ENCODE measurements at regions of chr18 and their contacts with region 1.

Region 1: GRCh38 chr18:8654503-8655451 is 45.5 kb downstream of the RAB12 start:
- DNase-seq: no peak
- H3K4me3 Mint-ChIP-seq: no peak overlapping the region
- H3K27ac Mint-ChIP-seq: no peak overlapping the region
- H3K4me1 Mint-ChIP-seq: no peaks in the 10 kb centered on the region
- H3K27me3 Mint-ChIP-seq: peaks cover 28% of the 10 kb centered on the region

Region 2: DNA sequence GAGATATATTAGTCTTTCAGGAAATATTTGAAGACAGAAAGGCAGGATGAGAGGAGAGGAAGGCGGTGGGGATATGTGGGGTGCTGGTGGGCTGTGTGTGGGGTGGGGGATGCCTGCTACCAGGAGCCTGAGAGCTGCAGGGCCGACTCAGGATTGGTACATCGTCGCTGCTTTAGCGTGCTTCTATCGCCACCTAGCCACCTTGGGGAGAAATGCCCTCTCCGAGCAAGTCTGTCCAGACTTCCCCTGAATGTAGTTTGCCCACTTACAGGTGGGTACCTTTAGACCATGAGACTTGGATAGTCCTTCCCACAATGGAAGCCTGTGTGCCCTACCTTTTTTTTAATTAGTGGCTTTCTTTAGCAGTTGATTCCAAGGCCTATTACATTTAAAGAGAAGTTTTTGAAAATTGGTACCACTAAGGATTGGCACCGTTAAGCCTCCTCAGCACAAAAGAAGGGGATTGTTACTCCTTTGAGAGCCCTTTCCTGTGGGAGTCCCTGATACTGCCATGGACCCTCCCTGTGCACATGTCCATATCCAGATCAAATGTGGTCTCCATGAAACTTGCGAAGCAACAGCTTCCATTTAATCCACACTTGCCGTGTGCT is 333.6 kb after region 1 on chr18:
- intact Hi-C with region 1: loop called (anchors 2 kb)
- DNase-seq: peak; percentile 26
- H3K4me3 Mint-ChIP-seq: no peak overlapping the region
- H3K27ac Mint-ChIP-seq: no peak overlapping the region
- H3K4me1 Mint-ChIP-seq: no peaks in the 10 kb centered on the region
- H3K27me3 Mint-ChIP-seq: peaks cover 11% of the 10 kb centered on the region

Region 3: GRCh38 chr18:9417073-9417841 is 762.5 kb after region 1 on chr18:
- intact Hi-C with region 1: no loop called
- DNase-seq: no peak
- H3K4me3 Mint-ChIP-seq: no peak overlapping the region
- H3K27ac Mint-ChIP-seq: no peak overlapping the region
- H3K4me1 Mint-ChIP-seq: no peaks in the 10 kb centered on the region
- H3K27me3 Mint-ChIP-seq: peaks cover 1% of the 10 kb centered on the region